Posterior vena cava (tissue), 2 donors: ENCODE measurements at regions of chr19 and their contacts with region 1.

Region 1: GRCh38 chr19:4896372-4896771 is 6.3 kb downstream of the ARRDC5 start:
- DNase-seq: no peak

Region 2: GRCh38 chr19:4342615-4343369 is 553.6 kb before region 1 on chr19:
- intact Hi-C with region 1: no loop called
- DNase-seq: peak; percentile 98

Region 3: GRCh38 chr19:4939466-4939865 is 43.1 kb after region 1 on chr19:
- intact Hi-C with region 1: loop called in 1 of 2 experiments (anchors 2 kb)
- DNase-seq: no peak